ENCODE measurements at regions of chr17 and their contacts with region 1.

Region 1: DNA sequence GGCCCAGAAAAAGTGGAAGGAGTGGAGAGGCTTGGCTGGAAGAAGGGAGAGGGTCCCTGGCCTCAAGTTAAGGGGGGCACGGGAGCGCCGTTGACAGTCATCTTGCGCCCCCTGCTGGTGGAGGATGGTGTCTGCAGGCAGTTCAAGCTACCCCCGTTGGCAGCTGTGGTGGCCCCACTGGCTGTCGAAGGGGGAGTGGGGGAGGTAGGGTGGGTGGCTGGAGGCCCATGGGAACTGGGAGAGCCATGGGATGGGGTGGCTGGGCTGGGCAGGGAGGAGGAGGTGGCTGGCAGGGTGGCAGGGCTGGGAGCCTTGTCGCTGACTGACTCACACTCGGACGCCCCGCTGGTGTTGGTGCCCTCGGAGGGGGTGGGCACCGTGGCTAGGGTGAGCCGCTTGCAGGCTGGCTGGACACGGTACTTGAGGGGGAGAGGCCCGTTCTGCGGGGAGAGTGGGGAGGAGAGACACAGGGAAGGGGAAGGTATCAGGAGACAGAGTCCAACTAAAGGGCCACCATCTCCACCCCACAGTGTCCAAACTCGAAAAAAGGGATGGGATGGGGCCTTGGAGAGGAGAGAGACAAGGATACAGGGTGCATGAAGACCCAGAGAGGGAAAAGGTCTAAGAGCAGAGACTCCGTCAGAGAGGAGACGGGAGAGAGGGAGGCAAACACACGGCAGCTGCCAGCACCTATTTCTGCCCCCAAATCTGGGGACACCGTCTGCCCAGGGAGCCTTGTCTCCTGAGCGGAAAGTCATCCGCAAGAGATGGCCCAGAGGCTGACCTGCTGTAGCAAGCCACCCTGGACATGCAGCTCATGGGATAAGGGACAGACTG is 5.2 kb downstream of the CISD3 start:
- DNase-seq: peak; percentile 82
- ATAC-seq: no peak
- H3K4me3 Mint-ChIP-seq: no peak overlapping the region
- H3K27ac Mint-ChIP-seq: no peak overlapping the region
- H3K4me1 Mint-ChIP-seq: peaks cover 41% of the 10 kb centered on the region
- H3K27me3 Mint-ChIP-seq: no peaks in the 10 kb centered on the region

Region 2: DNA sequence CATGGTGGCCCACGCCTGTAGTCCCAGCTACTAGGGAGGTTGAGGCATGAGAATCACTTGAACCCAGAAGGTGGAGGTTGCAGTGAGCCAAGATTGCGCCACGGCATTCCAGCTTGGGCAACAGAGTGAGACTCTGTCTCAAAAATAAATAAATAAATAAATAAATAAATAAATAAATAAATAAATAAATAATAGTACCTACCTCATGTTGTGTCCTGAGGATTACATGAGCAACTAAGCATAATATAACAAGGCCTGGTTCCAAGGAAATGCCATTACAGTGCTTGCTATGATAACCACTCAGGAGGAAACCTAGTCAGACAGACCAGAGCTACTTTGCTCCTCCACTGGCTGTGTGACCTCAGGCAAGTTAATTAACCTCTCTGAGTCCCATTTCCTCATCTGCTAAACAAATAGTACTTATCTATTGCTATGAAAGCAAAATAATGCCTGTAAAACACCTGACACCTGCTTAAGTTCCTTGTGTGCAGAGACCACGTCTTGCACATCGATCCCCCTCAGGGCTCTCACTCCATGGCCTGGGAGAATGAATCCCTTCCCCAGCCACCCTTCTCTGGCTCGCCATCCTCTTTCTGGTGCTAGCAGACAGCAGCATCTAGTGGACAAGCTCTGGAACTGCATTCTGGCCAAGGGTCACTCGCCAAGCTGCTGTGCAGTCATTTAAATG is 68.1 kb before region 1 on chr17:
- CTCF ChIA-PET with region 1: interaction called, 12 read pairs
- POLR2A ChIA-PET with region 1: interaction called, 3 read pairs
- DNase-seq: peak; percentile 72
- ATAC-seq: peak; percentile 70
- H3K4me3 Mint-ChIP-seq: no peak overlapping the region
- H3K27ac Mint-ChIP-seq: no peak overlapping the region
- H3K4me1 Mint-ChIP-seq: peaks cover 9% of the 10 kb centered on the region
- H3K27me3 Mint-ChIP-seq: peaks cover 49% of the 10 kb centered on the region

Region 3: DNA sequence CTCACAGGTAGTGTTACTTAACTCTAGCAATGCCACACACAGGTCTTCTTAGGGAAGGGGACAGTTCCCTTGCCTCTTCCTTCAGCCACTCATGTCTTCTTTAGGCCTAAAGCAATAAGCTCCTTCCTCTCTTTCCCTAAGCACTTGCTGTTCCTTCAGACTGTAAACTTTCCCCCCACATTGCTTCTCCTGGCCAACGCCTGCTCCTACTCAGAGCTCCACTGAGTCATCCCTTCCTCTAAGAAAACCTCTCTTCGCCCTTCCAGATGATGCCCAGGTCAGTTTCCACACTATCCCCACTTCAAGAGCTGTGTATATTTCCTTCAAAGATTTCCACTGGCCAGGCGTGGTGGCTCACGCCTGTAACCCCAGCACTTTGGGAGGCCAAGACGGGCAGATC is 48.1 kb before region 1 on chr17:
- CTCF ChIA-PET with region 1: interaction called, 141 read pairs
- POLR2A ChIA-PET with region 1: no interaction called
- DNase-seq: no peak
- ATAC-seq: no peak
- H3K4me3 Mint-ChIP-seq: no peak overlapping the region
- H3K27ac Mint-ChIP-seq: no peak overlapping the region
- H3K4me1 Mint-ChIP-seq: no peaks in the 10 kb centered on the region
- H3K27me3 Mint-ChIP-seq: peaks cover 12% of the 10 kb centered on the region

Region 4: DNA sequence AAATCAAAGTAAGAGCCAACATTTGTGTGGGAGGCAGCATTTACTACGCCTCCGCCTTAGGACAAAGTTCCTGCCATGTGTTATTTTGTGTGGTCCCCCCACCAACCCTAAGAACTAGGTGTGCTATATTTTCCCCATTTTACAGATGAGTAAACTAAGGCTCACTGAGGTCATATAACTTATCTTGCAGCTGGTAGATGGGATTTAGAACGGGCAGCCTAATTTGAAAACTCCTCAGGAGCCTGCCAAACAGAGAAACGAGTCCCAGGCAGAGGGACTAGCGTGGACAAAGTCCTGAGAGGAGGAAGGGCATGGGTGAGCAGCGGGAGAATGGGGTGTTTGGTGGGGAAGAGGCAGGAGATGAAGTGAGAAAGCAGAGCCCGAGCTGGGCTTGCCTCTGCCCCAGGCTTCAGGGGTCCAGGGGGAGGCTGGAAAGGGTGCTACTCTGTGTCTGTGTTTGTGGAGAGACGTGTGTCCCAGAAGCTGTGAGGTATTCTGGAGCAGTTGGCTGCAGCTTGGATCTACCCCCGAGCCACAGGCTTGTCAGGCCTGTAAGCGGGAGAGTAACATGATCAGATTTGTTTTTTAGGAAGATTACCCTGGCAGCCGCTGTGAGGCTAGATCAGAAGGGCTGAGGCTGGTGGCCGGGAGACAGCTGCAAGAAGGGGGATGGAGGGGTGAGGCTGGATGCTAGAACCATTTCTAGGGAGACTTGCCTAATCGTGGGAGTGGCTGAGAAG is 25.3 kb before region 1 on chr17:
- CTCF ChIA-PET with region 1: interaction called, 20 read pairs
- POLR2A ChIA-PET with region 1: interaction called, 9 read pairs
- DNase-seq: no peak
- ATAC-seq: no peak
- H3K4me3 Mint-ChIP-seq: no peak overlapping the region
- H3K27ac Mint-ChIP-seq: peak overlapping the region; percentile 56
- H3K4me1 Mint-ChIP-seq: peaks cover 61% of the 10 kb centered on the region
- H3K27me3 Mint-ChIP-seq: no peaks in the 10 kb centered on the region

Region 5: GRCh38 chr17:38752119-38752929 is 16.9 kb after region 1 on chr17 and contains the start of gene PSMB3:
- CTCF ChIA-PET with region 1: interaction called, 18 read pairs
- POLR2A ChIA-PET with region 1: interaction called, 4 read pairs
- DNase-seq: peak; percentile 99
- ATAC-seq: peak; percentile 88
- H3K4me3 Mint-ChIP-seq: peak within 1 kb of the TSS; percentile 99
- H3K27ac Mint-ChIP-seq: peak within 1 kb of the TSS; percentile 99
- H3K4me1 Mint-ChIP-seq: peaks cover 39% of the 10 kb centered on the region
- H3K27me3 Mint-ChIP-seq: peaks cover 29% of the 10 kb centered on the region
- total RNA-seq, gene PSMB3: 251 to 252 TPM